ENCODE measurements at regions of chr2 and their contacts with region 1.

Region 1: GRCh38 chr2:43194121-43194869 is 32.1 kb downstream of the ZFP36L2 start:
- DNase-seq: no peak
- ATAC-seq: no peak
- H3K4me3 ChIP-seq: no peak overlapping the region
- H3K4me3 Mint-ChIP-seq: peak overlapping the region; percentile 40
- H3K27ac ChIP-seq: peak overlapping the region; percentile 78 to 89
- H3K27ac Mint-ChIP-seq: peak overlapping the region; percentile 85
- H3K4me1 ChIP-seq: peaks cover 40 to 64% of the 10 kb centered on the region in 2 donors
- H3K4me1 Mint-ChIP-seq: peaks cover 43% of the 10 kb centered on the region
- H3K27me3 ChIP-seq: no peaks in the 10 kb centered on the region
- H3K27me3 Mint-ChIP-seq: no peaks in the 10 kb centered on the region
- CTCF ChIP-seq: no peak

Region 2: GRCh38 chr2:43158259-43158880 is 35.9 kb before region 1 on chr2:
- CTCF ChIA-PET with region 1: interaction called, 4 read pairs
- POLR2A ChIA-PET with region 1: no interaction called
- intact Hi-C with region 1: loop called (anchors 1 kb)
- DNase-seq: no peak
- ATAC-seq: peak; percentile 7
- H3K4me3 ChIP-seq: peak overlapping the region in 1 of 5 experiments; percentile 14
- H3K4me3 Mint-ChIP-seq: peak overlapping the region; percentile 81
- H3K27ac ChIP-seq: peak overlapping the region; percentile 80 to 84
- H3K27ac Mint-ChIP-seq: peak overlapping the region; percentile 97
- H3K4me1 ChIP-seq: peaks cover 27 to 51% of the 10 kb centered on the region in 2 donors
- H3K4me1 Mint-ChIP-seq: peaks cover 57% of the 10 kb centered on the region
- H3K27me3 ChIP-seq: no peaks in the 10 kb centered on the region
- H3K27me3 Mint-ChIP-seq: no peaks in the 10 kb centered on the region
- CTCF ChIP-seq: no peak

Region 3: GRCh38 chr2:43169987-43170386 is 24.3 kb before region 1 on chr2:
- CTCF ChIA-PET with region 1: interaction called, 14 read pairs
- POLR2A ChIA-PET with region 1: interaction called, 13 read pairs
- intact Hi-C with region 1: loop called (anchors 1 kb)
- DNase-seq: peak; percentile 59
- ATAC-seq: no peak
- H3K4me3 ChIP-seq: peak overlapping the region in 3 of 5 experiments; percentile 2 to 53 (median 35)
- H3K4me3 Mint-ChIP-seq: peak overlapping the region; percentile 87
- H3K27ac ChIP-seq: peak overlapping the region; percentile 85 to 91
- H3K27ac Mint-ChIP-seq: peak overlapping the region; percentile 100
- H3K4me1 ChIP-seq: peaks cover 69 to 84% of the 10 kb centered on the region in 2 donors
- H3K4me1 Mint-ChIP-seq: peaks cover 79% of the 10 kb centered on the region
- H3K27me3 ChIP-seq: no peaks in the 10 kb centered on the region
- H3K27me3 Mint-ChIP-seq: no peaks in the 10 kb centered on the region
- CTCF ChIP-seq: peak; percentile 46

Region 4: GRCh38 chr2:43178602-43179542 is 15.4 kb before region 1 on chr2:
- CTCF ChIA-PET with region 1: interaction called, 14 read pairs
- POLR2A ChIA-PET with region 1: interaction called, 13 read pairs
- intact Hi-C with region 1: loop called (anchors 1 kb)
- DNase-seq: no peak
- ATAC-seq: no peak
- H3K4me3 ChIP-seq: no peak overlapping the region
- H3K4me3 Mint-ChIP-seq: no peak overlapping the region
- H3K27ac ChIP-seq: peak overlapping the region in 1 of 2 donors; percentile 50
- H3K27ac Mint-ChIP-seq: peak overlapping the region; percentile 76
- H3K4me1 ChIP-seq: peaks cover 39 to 51% of the 10 kb centered on the region in 2 donors
- H3K4me1 Mint-ChIP-seq: peaks cover 52% of the 10 kb centered on the region
- H3K27me3 ChIP-seq: no peaks in the 10 kb centered on the region
- H3K27me3 Mint-ChIP-seq: no peaks in the 10 kb centered on the region
- CTCF ChIP-seq: no peak

Measured in B cell (primary cell).